Cardiac septum (tissue), 1 donor: ENCODE measurements at regions of chr3 and their contacts with region 1.

Region 1: GRCh38 chr3:51670823-51671733 is at the start of gene TEX264:
- DNase-seq: peak; percentile 97
- total RNA-seq, gene TEX264: 28.8 TPM

Region 2: DNA sequence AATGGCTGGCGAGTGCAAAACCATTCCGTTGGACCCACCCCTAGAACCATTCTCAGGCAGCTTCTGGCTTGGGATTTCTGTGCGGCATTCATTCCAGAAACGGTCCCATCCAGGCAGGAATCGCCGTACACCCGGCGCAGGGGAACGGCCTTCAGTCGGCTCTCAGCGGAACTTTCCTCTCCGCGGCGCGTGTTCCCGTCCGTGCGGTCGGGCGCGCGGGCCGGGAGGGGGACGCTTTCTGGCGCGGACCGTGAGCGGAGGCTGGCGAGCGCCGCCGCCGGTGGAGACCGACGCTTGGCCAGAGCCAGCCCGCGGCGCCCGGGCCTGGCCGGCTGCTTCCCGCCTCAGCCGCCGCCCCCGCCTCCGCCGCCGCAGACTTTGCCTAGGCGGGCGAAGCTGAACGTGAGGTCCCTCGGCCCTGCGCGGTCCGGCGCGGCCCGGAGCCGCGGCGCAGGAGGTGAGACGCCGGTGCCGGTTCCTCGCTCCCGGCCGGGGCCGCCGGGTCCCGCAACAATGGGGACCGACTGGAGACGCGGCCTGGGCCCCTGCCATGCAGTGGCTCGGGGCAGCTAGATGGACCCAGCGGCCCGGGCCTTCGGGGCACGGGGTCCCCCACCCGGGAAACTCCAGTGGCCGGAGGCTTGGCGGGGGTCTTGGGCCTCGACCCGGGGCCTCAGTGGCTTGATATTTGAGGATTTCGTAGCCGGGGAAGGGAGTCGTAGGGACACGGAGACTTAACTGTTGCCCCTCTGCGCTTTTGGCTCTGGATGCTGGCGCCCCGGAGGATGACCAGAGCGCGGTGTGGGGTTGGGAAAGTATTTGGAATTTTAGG is 132.4 kb before region 1 on chr3 and contains the start of gene RAD54L2:
- intact Hi-C with region 1: loop called (anchors 5 kb)
- DNase-seq: peak; percentile 91
- total RNA-seq, gene RAD54L2: 16.5 TPM

Region 3: DNA sequence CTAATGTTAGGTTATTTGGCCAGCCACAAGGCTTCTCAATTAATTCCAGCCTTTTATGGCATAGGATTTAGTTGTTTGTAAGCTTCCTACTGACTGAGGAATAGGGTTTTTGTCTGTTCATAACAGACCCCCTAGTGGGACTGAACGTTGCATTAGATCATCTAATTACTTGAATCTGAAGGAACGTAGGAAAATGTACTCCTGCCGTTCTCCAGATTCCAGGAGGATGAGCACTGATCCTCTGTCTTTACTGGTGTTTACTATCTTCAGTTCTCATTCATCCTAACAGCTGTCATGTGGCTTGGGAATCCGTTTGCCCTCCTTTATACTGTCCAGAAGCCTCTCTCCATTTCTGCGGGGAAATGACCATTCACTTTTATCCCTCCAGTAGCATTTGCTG is 79.8 kb before region 1 on chr3:
- intact Hi-C with region 1: no loop called
- DNase-seq: no peak

Region 4: GRCh38 chr3:51682079-51682478 is 11.0 kb after region 1 on chr3:
- intact Hi-C with region 1: loop called (anchors 2 kb)
- DNase-seq: no peak